ENCODE measurements at regions of chr11 and their contacts with region 1.

Region 1: DNA sequence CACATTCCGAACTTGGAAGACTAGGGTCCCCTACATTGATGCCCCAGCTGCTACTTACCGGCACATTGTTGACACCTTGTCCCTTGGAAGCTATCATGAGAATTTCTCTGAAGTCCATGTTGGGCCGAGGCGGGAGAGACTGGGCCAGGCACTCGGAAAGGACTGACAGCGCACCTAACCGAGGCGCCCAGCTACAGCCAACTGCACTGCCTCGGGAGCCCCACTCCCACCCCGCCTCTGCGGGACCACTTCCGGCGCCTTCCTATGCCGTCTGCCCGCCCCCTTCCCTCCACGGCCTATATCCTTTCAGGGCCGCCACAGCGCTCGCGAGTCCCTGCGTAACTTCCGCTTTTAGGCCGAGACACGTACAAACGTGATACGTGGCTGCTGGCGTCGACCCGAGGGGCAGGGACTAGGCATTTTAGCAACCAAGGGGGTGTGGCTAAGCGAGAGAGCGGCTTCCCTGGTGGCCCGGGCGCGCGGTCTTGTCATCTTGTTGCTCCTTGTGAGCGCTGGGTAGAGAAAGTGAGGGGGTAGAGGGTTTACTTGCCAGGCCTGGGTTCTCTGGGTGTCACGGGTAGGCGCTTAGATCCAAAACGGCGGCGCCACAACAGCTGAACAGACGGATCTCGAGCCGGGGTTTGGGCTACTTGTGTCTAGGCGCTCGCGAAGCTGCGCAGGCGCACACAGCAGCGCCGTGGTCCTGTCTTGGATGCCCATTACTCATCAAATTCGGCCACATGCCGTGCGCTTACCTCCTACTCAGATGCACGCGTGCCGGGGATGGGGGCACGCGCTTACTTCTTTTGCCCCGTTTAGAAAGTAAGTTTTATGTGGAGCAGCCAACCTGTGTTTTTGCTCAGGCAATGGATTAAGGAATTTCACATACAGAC is at the start of gene SPTY2D1:
- DNase-seq: peak; percentile 90 to 100 (median 96)
- ATAC-seq: peak; percentile 92
- H3K4me3 ChIP-seq: peak within 1 kb of the TSS; percentile 75
- H3K4me3 Mint-ChIP-seq: peak within 1 kb of the TSS; percentile 96
- H3K27ac ChIP-seq: peak within 1 kb of the TSS; percentile 88 to 98
- H3K27ac Mint-ChIP-seq: peak within 1 kb of the TSS; percentile 97
- H3K4me1 ChIP-seq: peaks cover 25% of the 10 kb centered on the region
- H3K4me1 Mint-ChIP-seq: peaks cover 36% of the 10 kb centered on the region
- H3K27me3 ChIP-seq: no peaks in the 10 kb centered on the region
- H3K27me3 Mint-ChIP-seq: no peaks in the 10 kb centered on the region
- CTCF ChIP-seq: no peak
- total RNA-seq, gene SPTY2D1: 58.7 to 66.0 TPM

Region 2: GRCh38 chr11:16771350-16772140 is 1862.8 kb before region 1 on chr11:
- CTCF ChIA-PET with region 1: no interaction called
- POLR2A ChIA-PET with region 1: no interaction called
- intact Hi-C with region 1: no loop called
- DNase-seq: no peak
- ATAC-seq: no peak
- H3K4me3 ChIP-seq: no peak overlapping the region
- H3K4me3 Mint-ChIP-seq: no peak overlapping the region
- H3K27ac ChIP-seq: no peak overlapping the region
- H3K27ac Mint-ChIP-seq: no peak overlapping the region
- H3K4me1 ChIP-seq: no peaks in the 10 kb centered on the region
- H3K4me1 Mint-ChIP-seq: no peaks in the 10 kb centered on the region
- H3K27me3 ChIP-seq: no peaks in the 10 kb centered on the region
- H3K27me3 Mint-ChIP-seq: no peaks in the 10 kb centered on the region
- CTCF ChIP-seq: no peak

Region 3: GRCh38 chr11:17077520-17078401 is 1556.6 kb before region 1 on chr11 and contains the start of gene RPS13:
- CTCF ChIA-PET with region 1: no interaction called
- POLR2A ChIA-PET with region 1: interaction called, 5 read pairs
- intact Hi-C with region 1: loop called in 1 of 2 experiments (anchors 10 kb)
- DNase-seq: peak; percentile 88 to 99 (median 92)
- ATAC-seq: peak; percentile 92
- H3K4me3 ChIP-seq: peak within 1 kb of the TSS; percentile 94
- H3K4me3 Mint-ChIP-seq: peak within 1 kb of the TSS; percentile 92
- H3K27ac ChIP-seq: peak within 1 kb of the TSS; percentile 93 to 94
- H3K27ac Mint-ChIP-seq: peak within 1 kb of the TSS; percentile 95
- H3K4me1 ChIP-seq: peaks cover 28% of the 10 kb centered on the region
- H3K4me1 Mint-ChIP-seq: peaks cover 45% of the 10 kb centered on the region
- H3K27me3 ChIP-seq: no peaks in the 10 kb centered on the region
- H3K27me3 Mint-ChIP-seq: no peaks in the 10 kb centered on the region
- CTCF ChIP-seq: no peak
- total RNA-seq, gene RPS13: 2,215 to 2,217 TPM

Region 4: DNA sequence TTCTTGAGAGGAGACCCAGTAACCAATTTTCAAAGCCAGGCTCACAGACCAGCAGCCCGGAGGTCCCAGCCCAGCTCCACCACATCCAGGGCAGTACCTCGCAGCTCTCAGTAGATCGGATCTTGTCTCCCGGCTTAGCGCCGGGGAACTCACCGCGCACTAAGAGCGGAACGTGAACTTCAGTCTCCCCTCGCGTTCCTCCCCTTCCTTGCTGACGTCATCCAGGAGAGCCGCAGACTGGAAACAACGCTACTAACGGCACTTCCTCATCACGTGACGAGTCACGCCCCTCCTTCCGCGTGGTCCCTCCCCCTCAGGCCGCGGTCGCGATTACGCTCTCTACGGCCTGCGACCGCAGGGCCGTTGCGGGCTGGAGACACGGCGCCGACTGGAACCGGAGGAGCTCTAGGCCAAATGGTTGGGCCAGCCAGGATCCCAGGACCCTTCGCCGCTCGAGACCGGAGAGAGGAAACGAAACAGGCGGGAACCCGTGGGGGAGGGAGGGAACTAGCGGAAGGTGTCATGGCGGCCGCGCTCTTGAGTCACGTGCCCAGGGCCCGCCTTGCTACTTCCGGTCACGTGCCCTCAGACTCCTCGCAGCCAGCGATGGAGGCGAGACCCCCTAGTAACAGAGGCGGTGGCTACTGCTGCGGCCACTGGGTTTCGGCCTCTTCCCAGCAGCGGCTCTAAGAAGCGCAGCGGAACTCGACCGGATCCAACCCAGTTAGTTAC is 312.2 kb before region 1 on chr11 and contains the starts of genes GTF2H1 and HPS5:
- CTCF ChIA-PET with region 1: no interaction called
- POLR2A ChIA-PET with region 1: interaction called, 16 read pairs
- intact Hi-C with region 1: loop called (anchors 1 to 5 kb)
- DNase-seq: peak; percentile 90 to 99 (median 93)
- ATAC-seq: peak; percentile 87
- H3K4me3 ChIP-seq: peak within 1 kb of the TSS; percentile 74
- H3K4me3 Mint-ChIP-seq: peak within 1 kb of the TSS; percentile 94
- H3K27ac ChIP-seq: peak within 1 kb of the TSS; percentile 97 to 98
- H3K27ac Mint-ChIP-seq: peak within 1 kb of the TSS; percentile 99
- H3K4me1 ChIP-seq: peaks cover 25% of the 10 kb centered on the region
- H3K4me1 Mint-ChIP-seq: peaks cover 87% of the 10 kb centered on the region
- H3K27me3 ChIP-seq: no peaks in the 10 kb centered on the region
- H3K27me3 Mint-ChIP-seq: no peaks in the 10 kb centered on the region
- CTCF ChIP-seq: no peak
- total RNA-seq, gene GTF2H1: 15.1 to 17.7 TPM
- total RNA-seq, gene HPS5: 8.8 to 9.3 TPM

Region 5: DNA sequence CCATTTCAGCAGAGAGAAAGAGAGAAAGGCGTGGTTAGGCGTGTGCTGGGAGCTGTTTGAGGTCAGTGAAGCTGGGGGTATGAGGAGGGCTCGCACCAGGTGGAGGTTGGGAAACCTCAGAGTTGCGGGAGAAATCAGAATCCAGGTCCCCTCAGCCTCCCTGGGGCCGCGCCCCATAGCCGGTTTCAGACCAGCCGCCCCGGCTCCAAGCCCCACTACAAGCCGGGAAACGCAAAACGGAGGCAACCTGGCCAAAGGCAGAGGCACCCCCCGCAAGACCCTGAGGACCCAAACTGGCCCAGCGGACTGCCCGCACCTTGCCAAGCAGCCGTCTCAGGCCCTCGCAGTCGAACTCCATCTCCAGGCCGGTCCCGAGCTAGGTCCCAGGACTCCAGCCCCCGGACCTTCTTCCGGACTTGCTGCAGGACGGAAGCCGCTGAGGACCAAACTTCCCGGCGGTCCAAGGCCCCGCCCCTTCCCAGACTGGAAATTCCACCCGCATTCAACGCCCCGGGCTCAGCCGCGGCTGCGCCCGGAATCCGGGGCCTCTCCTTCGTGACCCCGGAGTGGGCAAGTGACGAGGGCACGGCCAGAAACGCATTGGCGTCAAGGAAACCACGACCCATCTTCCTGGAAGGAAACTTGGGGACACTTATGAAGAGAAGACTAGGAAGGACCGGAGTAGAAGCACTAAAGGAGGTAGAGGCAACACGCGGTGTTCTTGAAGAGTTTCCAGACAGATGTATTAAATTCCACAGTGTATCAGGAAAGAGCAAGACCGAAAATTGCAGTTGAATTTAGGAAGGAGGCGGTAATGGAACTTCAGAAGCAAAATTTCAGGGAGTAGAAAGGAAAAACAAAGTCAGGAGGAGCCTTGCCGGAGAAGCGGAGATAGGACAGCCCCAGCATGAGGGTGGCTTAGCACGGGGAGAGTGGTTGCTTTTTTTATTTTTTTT is 45.8 kb before region 1 on chr11 and contains the start of gene UEVLD:
- CTCF ChIA-PET with region 1: interaction called, 3 read pairs
- POLR2A ChIA-PET with region 1: interaction called, 18 read pairs
- intact Hi-C with region 1: loop called (anchors 5 kb)
- DNase-seq: peak in 13 of 14 experiments; percentile 5 to 86 (median 38)
- ATAC-seq: peak; percentile 45
- H3K4me3 ChIP-seq: peak within 1 kb of the TSS; percentile 90
- H3K4me3 Mint-ChIP-seq: no peak within 1 kb of the TSS
- H3K27ac ChIP-seq: peak within 1 kb of the TSS; percentile 66 to 92
- H3K27ac Mint-ChIP-seq: no peak within 1 kb of the TSS
- H3K4me1 ChIP-seq: peaks cover 52% of the 10 kb centered on the region
- H3K4me1 Mint-ChIP-seq: no peaks in the 10 kb centered on the region
- H3K27me3 ChIP-seq: no peaks in the 10 kb centered on the region
- H3K27me3 Mint-ChIP-seq: no peaks in the 10 kb centered on the region
- CTCF ChIP-seq: no peak
- total RNA-seq, gene UEVLD: 1.5 to 2.9 TPM

Region 6: GRCh38 chr11:18669220-18669598 is 34.8 kb after region 1 on chr11:
- CTCF ChIA-PET with region 1: no interaction called
- POLR2A ChIA-PET with region 1: interaction called, 13 read pairs
- intact Hi-C with region 1: loop called (anchors 2 to 5 kb)
- DNase-seq: peak in 4 of 14 experiments; percentile 10 to 43 (median 28)
- ATAC-seq: no peak
- H3K4me3 ChIP-seq: no peak overlapping the region
- H3K4me3 Mint-ChIP-seq: no peak overlapping the region
- H3K27ac ChIP-seq: no peak overlapping the region
- H3K27ac Mint-ChIP-seq: peak overlapping the region; percentile 40
- H3K4me1 ChIP-seq: peaks cover 32% of the 10 kb centered on the region
- H3K4me1 Mint-ChIP-seq: peaks cover 57% of the 10 kb centered on the region
- H3K27me3 ChIP-seq: no peaks in the 10 kb centered on the region
- H3K27me3 Mint-ChIP-seq: no peaks in the 10 kb centered on the region
- CTCF ChIP-seq: no peak

Region 7: GRCh38 chr11:18721561-18722292 is 87.3 kb after region 1 on chr11:
- CTCF ChIA-PET with region 1: interaction called, 4 read pairs
- POLR2A ChIA-PET with region 1: interaction called, 22 read pairs
- intact Hi-C with region 1: loop called in 1 of 2 experiments (anchors 5 kb)
- DNase-seq: peak in 13 of 14 experiments; percentile 20 to 77 (median 35)
- ATAC-seq: peak; percentile 45
- H3K4me3 ChIP-seq: peak overlapping the region; percentile 94
- H3K4me3 Mint-ChIP-seq: peak overlapping the region; percentile 82
- H3K27ac ChIP-seq: peak overlapping the region in 1 of 2 donors; percentile 29
- H3K27ac Mint-ChIP-seq: peak overlapping the region; percentile 35
- H3K4me1 ChIP-seq: peaks cover 21% of the 10 kb centered on the region
- H3K4me1 Mint-ChIP-seq: peaks cover 10% of the 10 kb centered on the region
- H3K27me3 ChIP-seq: no peaks in the 10 kb centered on the region
- H3K27me3 Mint-ChIP-seq: no peaks in the 10 kb centered on the region
- CTCF ChIP-seq: peak; percentile 88